Endothelial cell of umbilical vein (primary cell): ENCODE measurements at regions of chr14 and their contacts with region 1.

Region 1: DNA sequence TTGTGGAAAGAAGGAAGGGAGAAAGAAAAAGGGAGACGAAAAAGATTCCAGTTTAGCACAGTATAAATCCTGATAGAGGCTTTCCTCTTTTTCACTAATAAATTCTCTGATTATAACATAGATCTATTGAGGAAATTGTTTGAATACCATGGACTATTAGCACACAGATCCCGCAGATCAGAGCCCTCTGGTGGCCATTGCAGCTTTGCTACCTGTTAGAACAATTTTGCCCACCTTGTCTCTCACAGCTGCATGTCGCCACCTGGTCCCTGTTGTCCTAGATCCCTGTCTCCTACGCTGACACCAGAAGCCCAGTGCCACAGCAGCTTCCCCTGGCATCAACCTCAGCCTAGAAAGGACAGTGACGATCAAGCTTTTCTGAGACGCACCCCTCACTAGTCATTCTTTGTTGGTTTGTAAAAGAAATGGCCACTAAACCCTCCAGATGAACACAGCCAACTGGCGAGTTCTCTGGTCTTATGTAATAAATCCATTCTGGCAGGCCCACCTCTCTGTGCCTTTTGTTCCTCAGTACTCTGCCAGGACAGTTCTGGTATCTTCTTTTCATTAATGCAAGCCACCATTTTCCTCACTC is 9.9 kb downstream of the GPHB5 start:
- DNase-seq: peak; percentile 57
- H3K4me3 ChIP-seq: no peak overlapping the region
- H3K27ac ChIP-seq: no peak overlapping the region
- H3K4me1 ChIP-seq: no peaks in the 10 kb centered on the region
- H3K27me3 ChIP-seq: peaks cover 6 to 16% of the 10 kb centered on the region in 2 experiments
- CTCF ChIP-seq: peak; percentile 64 to 74
- POLR2A ChIP-seq: no peak

Region 2: GRCh38 chr14:62162998-62163589 is 1145.7 kb before region 1 on chr14:
- CTCF ChIA-PET with region 1: interaction called, 4 read pairs
- POLR2A ChIA-PET with region 1: no interaction called
- dilution Hi-C with region 1: no loop called
- intact Hi-C with region 1: loop called (anchors 1 kb)
- DNase-seq: peak; percentile 46
- H3K4me3 ChIP-seq: no peak overlapping the region
- H3K27ac ChIP-seq: no peak overlapping the region
- H3K4me1 ChIP-seq: no peaks in the 10 kb centered on the region
- H3K27me3 ChIP-seq: peaks cover 7 to 10% of the 10 kb centered on the region in 2 experiments
- CTCF ChIP-seq: peak; percentile 62 to 69
- POLR2A ChIP-seq: no peak

Region 3: DNA sequence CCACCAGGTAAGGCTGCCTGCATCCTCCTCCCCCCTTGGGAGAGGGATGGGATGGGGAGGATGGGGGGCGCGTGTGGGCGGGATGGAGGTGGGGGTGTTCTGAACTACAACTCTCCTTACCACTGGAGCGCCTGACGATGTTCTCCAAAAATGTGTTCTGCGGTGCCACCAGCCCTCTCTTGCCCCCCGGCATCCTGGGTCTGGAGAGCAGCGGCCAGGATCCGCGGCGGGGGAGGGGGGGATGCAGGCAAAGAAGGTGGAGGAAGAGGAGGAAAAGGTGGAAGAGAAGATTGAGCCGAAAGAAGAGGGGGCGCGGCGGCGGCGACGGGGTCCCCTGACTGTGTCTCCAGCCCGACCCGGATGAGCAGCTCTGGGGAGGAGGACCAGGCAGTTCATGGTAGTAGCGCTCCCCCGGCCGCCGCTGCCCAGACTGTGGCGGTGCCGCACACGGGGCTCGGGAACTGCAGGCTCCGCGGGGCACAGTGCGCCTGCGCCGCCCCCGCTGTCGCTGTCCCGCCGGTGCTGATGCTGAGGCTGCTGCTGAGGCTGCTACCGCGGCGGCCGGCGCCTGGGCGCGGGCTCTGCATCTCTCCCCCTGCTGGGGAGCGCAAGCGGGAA is 263.7 kb before region 1 on chr14 and contains the start of gene KCNH5:
- CTCF ChIA-PET with region 1: no interaction called
- POLR2A ChIA-PET with region 1: no interaction called
- dilution Hi-C with region 1: no loop called
- intact Hi-C with region 1: loop called (anchors 10 kb)
- DNase-seq: peak; percentile 50
- H3K4me3 ChIP-seq: no peak within 1 kb of the TSS
- H3K27ac ChIP-seq: no peak within 1 kb of the TSS
- H3K4me1 ChIP-seq: peaks cover 1% of the 10 kb centered on the region
- H3K27me3 ChIP-seq: peaks cover 52 to 79% of the 10 kb centered on the region in 2 experiments
- CTCF ChIP-seq: no peak
- POLR2A ChIP-seq: no peak
- total RNA-seq, gene KCNH5: not detected in 2 replicates

Region 4: GRCh38 chr14:63296060-63296563 is 12.7 kb before region 1 on chr14:
- CTCF ChIA-PET with region 1: interaction called, 11 read pairs
- POLR2A ChIA-PET with region 1: no interaction called
- dilution Hi-C with region 1: no loop called
- intact Hi-C with region 1: no loop called
- DNase-seq: peak; percentile 47
- H3K4me3 ChIP-seq: no peak overlapping the region
- H3K27ac ChIP-seq: no peak overlapping the region
- H3K4me1 ChIP-seq: no peaks in the 10 kb centered on the region
- H3K27me3 ChIP-seq: peaks cover 0 to 8% of the 10 kb centered on the region in 2 experiments
- CTCF ChIP-seq: no peak
- POLR2A ChIP-seq: peak; percentile 5